ENCODE measurements at regions of chr5 and their contacts with region 1.

Region 1: DNA sequence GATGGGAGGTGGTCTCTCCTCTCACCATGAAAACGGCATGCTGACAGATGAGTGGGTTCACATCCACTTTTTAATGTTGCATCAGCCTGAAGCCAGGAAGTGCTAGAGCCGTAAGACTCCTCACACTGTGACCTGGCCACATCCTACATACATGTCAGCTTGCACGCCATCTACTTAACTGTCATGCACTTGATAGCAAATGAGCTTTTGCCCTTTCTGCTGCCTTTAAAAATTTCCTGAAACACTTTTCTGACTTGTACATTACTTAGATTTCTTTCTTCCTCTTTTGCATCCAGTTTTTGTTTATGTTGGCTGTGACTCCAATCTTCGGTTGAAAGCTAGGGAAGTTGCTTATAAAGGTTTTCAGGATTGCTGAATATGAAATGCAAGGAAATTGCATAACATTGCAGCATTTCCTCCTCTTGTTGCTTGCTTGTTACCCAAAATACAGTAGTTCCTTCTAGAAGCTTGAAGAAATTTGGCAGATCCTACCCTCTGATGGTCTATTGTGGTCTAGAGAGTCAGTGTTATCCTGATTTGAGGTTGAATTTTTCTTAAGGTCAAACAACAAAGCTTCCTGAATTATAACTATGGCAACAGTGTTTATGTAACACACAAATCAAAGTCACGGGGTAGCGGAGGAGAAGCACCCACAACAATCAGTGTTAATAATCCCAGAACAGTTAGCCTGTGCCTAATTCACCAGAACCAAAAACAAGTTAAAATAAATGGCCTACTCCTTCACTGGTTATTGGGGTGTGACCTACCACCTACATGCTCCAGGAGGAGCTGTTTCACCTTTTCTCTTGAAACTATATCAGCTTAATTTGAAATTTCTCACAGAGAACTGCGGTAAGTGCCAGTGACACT is 232.5 kb downstream of the ARHGAP26 start:
- DNase-seq: no peak
- ATAC-seq: peak; percentile 80
- H3K4me3 Mint-ChIP-seq: peak overlapping the region; percentile 13
- H3K27ac Mint-ChIP-seq: peak overlapping the region; percentile 94
- H3K4me1 Mint-ChIP-seq: peaks cover 85% of the 10 kb centered on the region
- H3K27me3 Mint-ChIP-seq: no peaks in the 10 kb centered on the region
- CTCF ChIP-seq: no peak

Region 2: GRCh38 chr5:141701360-141702119 is 1301.2 kb before region 1 on chr5:
- CTCF ChIA-PET with region 1: no interaction called
- POLR2A ChIA-PET with region 1: no interaction called
- intact Hi-C with region 1: no loop called
- DNase-seq: peak; percentile 26
- ATAC-seq: peak; percentile 73
- H3K4me3 Mint-ChIP-seq: no peak overlapping the region
- H3K27ac Mint-ChIP-seq: no peak overlapping the region
- H3K4me1 Mint-ChIP-seq: peaks cover 20% of the 10 kb centered on the region
- H3K27me3 Mint-ChIP-seq: peaks cover 57% of the 10 kb centered on the region
- CTCF ChIP-seq: no peak

Region 3: DNA sequence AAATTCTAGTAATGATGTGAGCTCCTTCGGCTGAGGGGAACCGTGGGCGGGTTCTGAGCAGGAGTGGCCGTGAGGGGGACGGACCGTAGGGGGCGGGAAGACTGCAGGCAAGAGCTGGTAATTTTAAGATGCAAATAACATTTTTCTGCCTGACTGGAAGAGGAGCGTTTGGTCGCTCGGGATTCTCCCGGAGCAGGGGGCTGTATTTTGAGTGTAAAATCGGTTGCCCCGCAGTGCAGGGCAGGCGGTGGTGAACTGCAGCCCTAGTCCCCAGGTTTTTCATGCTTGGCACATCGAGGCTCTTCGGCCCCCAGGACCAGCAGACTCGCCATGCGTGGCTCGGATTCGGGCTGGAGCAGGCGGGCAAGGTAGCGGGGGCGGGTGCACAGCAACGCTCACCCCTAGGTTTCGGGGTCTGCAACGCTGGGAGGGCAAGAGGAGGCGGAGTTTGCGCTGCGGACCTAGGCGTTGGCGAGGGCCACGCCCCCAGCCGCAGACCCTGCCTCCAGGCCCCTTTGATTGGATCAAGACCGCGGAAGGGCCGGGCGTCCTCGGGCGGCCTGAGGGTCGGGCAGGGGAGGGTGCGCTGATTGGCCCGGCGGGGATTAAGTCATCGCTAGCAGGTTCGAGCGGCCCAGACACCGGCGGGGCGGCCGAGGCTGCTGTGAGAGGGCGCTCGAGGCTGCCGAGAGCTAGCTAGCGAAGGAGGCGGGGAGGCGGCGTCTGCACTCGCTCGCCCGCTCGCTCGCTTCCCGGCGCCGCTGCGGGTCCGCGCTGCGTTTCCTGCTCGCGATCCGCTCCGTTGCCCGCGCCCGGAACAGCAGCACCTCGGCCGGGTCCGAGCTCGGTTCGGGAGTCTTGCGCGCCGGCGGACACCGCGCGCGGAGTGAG is 232.7 kb before region 1 on chr5 and contains the start of gene ARHGAP26:
- CTCF ChIA-PET with region 1: no interaction called
- POLR2A ChIA-PET with region 1: no interaction called
- intact Hi-C with region 1: loop called (anchors 10 kb)
- DNase-seq: peak; percentile 89
- ATAC-seq: peak; percentile 95
- H3K4me3 Mint-ChIP-seq: peak within 1 kb of the TSS; percentile 97
- H3K27ac Mint-ChIP-seq: peak within 1 kb of the TSS; percentile 91
- H3K4me1 Mint-ChIP-seq: peaks cover 25% of the 10 kb centered on the region
- H3K27me3 Mint-ChIP-seq: no peaks in the 10 kb centered on the region
- CTCF ChIP-seq: no peak
- total RNA-seq, gene ARHGAP26: 14.0 and 20.9 TPM in 2 replicates

Region 4: GRCh38 chr5:143119291-143119769 is 116.6 kb after region 1 on chr5:
- CTCF ChIA-PET with region 1: no interaction called
- POLR2A ChIA-PET with region 1: no interaction called
- intact Hi-C with region 1: loop called (anchors 5 kb)
- DNase-seq: no peak
- ATAC-seq: peak; percentile 40
- H3K4me3 Mint-ChIP-seq: no peak overlapping the region
- H3K27ac Mint-ChIP-seq: peak overlapping the region; percentile 25
- H3K4me1 Mint-ChIP-seq: peaks cover 18% of the 10 kb centered on the region
- H3K27me3 Mint-ChIP-seq: no peaks in the 10 kb centered on the region
- CTCF ChIP-seq: no peak

Region 5: DNA sequence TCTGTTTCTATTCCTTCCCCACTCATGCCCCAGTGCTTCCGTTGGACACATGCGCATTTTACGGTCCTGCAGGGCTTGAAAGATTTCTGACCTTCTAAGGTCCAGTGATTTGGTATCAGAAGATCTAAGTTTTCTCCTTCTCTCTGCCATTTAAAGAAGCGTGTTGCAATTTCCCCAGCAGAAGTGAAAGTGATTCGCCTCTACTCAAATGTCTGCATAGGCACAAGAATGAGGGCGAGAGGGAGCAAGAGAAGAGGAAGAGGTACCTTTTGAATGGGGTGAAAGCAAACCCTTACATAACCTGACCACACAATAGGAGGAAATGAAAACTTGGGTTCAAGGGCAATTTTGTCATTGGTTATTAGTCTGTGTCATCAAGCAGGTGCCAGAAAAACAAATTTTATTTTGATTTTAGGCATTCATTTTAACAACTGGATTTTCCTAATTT is 432.5 kb after region 1 on chr5:
- CTCF ChIA-PET with region 1: interaction called, 14 read pairs
- POLR2A ChIA-PET with region 1: interaction called, 6 read pairs
- intact Hi-C with region 1: loop called (anchors 1 kb)
- DNase-seq: peak; percentile 31
- ATAC-seq: peak; percentile 82
- H3K4me3 Mint-ChIP-seq: peak overlapping the region; percentile 89
- H3K27ac Mint-ChIP-seq: peak overlapping the region; percentile 99
- H3K4me1 Mint-ChIP-seq: peaks cover 69% of the 10 kb centered on the region
- H3K27me3 Mint-ChIP-seq: no peaks in the 10 kb centered on the region
- CTCF ChIP-seq: no peak

Region 6: GRCh38 chr5:144142139-144142823 is 1139.6 kb after region 1 on chr5:
- CTCF ChIA-PET with region 1: interaction called, 6 read pairs
- POLR2A ChIA-PET with region 1: no interaction called
- intact Hi-C with region 1: loop called (anchors 1 kb)
- DNase-seq: no peak
- ATAC-seq: peak; percentile 90
- H3K4me3 Mint-ChIP-seq: no peak overlapping the region
- H3K27ac Mint-ChIP-seq: peak overlapping the region; percentile 74
- H3K4me1 Mint-ChIP-seq: peaks cover 17% of the 10 kb centered on the region
- H3K27me3 Mint-ChIP-seq: no peaks in the 10 kb centered on the region
- CTCF ChIP-seq: no peak